ENCODE measurements at regions of chr9 and their contacts with region 1.

Region 1: DNA sequence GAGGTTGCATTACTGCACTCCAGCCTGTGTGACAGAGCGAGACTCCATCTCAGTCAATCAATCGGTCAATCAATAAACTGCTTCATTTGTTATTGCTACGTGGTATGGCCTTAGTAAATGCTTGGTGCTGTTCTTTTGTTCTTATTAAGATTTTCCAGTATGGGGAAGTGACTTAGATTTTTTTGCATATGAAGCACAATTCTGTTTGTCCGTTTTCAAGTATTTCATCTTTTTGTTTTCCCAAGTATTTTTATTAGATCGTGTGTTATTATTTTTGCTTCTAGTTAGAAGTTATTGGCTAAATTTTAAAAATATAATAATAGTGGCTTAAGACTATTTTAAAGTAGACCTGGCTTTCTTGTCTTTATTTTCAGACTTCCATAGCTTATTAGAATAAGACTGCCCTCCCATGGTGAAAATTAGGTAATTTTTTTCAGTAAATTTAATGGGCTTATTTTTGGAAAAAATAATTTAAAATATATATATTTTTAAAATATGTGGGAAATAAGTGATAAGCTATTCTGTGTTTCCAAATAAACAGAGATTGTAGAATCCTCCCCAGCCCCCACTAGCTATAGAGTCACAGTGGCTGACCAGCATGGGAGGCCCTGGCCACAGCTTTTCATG is 14.7 kb upstream of the OMD start:
- H3K4me3 ChIP-seq: no peak overlapping the region
- H3K27ac ChIP-seq: no peak overlapping the region
- H3K4me1 ChIP-seq: no peaks in the 10 kb centered on the region
- CTCF ChIP-seq: no peak

Region 2: GRCh38 chr9:92325269-92325990 is 113.6 kb before region 1 on chr9 and contains the starts of genes CENPP and NOL8:
- CTCF ChIA-PET with region 1: interaction called, 13 read pairs
- POLR2A ChIA-PET with region 1: no interaction called
- H3K4me3 ChIP-seq: peak within 1 kb of the TSS; percentile 99
- H3K27ac ChIP-seq: peak within 1 kb of the TSS; percentile 86
- H3K4me1 ChIP-seq: no peaks in the 10 kb centered on the region
- CTCF ChIP-seq: no peak

Measured in HEK293 (cell line).